Colonic mucosa (tissue), 4 donors: ENCODE measurements at regions of chr6 and their contacts with region 1.

Region 1: DNA sequence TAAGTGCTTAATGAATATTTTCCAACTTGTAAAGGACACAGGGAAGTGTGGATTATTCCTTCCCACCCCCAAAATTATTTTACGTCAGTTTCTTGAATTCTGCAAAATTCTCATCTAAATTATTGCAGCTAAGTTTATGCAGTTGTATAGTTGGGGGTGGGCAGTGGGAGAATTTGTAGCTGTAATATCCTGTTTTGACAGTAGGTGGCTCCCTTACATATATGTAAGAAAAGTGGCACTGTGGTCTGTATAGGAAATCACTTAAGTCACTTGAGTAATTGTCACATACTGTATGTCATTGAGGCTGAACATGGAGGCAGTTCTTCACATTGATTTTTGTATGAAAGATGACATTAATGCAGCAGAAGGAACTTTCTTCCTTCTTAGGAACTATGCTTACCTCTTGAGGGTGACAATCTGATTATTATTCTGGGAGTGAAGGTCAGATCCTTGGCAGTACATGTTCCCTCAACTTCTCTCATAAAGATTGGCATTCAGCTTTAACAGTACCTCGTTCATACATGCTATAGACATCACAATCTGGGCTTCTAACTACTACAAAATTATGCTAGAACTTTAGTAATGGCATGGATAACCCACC is 14.7 kb upstream of the CFAP206 start:
- DNase-seq: peak; percentile 29
- H3K4me3 ChIP-seq: no peak overlapping the region
- H3K27ac ChIP-seq: no peak overlapping the region
- H3K4me1 ChIP-seq: no peaks in the 10 kb centered on the region
- H3K27me3 ChIP-seq: no peaks in the 10 kb centered on the region
- CTCF ChIP-seq: peak; percentile 77

Region 2: DNA sequence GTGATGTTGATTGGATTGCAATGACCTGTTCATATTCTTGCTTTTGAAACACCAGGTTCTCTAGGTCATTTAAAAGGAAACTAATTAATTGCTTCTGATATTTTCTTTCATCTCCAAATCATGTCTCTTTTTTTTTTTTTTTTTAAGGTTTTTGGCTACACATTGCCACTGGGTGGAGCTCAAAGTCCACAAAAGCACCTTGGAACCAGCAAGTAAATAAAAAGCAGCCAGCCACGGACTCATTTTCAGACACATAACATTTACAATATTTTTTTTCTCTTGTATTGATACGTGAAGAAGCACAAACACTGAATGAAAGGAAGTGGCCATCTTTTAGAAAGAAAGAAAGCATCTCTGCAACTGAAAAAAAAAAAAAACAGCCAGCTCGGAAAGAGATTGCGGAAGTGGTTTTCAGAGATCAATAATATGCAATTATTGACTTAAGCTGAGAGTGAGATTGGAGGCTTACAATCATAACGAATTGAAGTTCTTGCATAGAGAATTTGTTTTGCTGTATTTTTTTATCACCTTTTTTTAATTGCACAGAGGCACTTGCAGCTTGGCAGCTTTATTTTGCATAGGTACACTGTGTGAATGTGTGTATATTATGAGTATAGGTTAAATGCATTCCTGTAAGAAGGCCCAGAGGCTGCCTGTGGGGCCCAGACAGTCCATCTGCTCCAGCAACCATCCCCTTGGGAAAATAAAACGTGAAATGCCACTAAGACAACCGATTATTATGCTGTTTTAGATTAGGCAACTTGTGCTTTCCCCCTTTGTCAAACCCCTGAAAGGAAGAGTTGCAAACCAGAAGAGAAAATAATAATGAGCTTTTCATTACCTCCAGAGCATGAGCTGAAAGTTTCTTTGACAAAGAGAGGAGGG is 326.4 kb before region 1 on chr6:
- intact Hi-C with region 1: loop called (anchors 10 kb)
- DNase-seq: peak; percentile 44
- H3K4me3 ChIP-seq: no peak overlapping the region
- H3K27ac ChIP-seq: no peak overlapping the region
- H3K4me1 ChIP-seq: no peaks in the 10 kb centered on the region
- H3K27me3 ChIP-seq: no peaks in the 10 kb centered on the region
- CTCF ChIP-seq: peak; percentile 45

Region 3: GRCh38 chr6:87139236-87139635 is 253.9 kb before region 1 on chr6:
- intact Hi-C with region 1: loop called (anchors 2 kb)
- DNase-seq: peak; percentile 40
- H3K4me3 ChIP-seq: no peak overlapping the region
- H3K27ac ChIP-seq: no peak overlapping the region
- H3K4me1 ChIP-seq: no peaks in the 10 kb centered on the region
- H3K27me3 ChIP-seq: no peaks in the 10 kb centered on the region
- CTCF ChIP-seq: peak; percentile 57

Region 4: DNA sequence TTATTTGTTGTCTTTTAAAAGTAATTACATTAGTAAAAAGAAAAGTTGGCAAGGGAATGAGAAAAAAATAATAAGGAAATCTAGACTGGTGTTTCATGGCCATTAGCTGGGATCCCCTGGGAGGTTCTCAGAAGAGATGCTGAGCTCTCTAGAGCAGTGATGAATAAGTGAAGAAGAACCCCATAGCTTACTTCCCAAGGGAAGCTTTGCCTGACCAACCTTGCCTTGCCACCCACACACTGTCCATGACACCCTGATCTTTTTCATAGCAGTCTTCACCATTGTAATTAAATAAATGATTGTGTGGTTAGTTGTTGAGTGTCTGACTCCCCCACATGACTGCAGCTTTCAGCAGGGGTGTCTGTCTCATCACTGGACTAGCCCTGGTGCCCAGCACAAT is 42.6 kb before region 1 on chr6:
- intact Hi-C with region 1: no loop called
- DNase-seq: no peak
- H3K4me3 ChIP-seq: no peak overlapping the region
- H3K27ac ChIP-seq: no peak overlapping the region
- H3K4me1 ChIP-seq: no peaks in the 10 kb centered on the region
- H3K27me3 ChIP-seq: no peaks in the 10 kb centered on the region
- CTCF ChIP-seq: no peak

Region 5: DNA sequence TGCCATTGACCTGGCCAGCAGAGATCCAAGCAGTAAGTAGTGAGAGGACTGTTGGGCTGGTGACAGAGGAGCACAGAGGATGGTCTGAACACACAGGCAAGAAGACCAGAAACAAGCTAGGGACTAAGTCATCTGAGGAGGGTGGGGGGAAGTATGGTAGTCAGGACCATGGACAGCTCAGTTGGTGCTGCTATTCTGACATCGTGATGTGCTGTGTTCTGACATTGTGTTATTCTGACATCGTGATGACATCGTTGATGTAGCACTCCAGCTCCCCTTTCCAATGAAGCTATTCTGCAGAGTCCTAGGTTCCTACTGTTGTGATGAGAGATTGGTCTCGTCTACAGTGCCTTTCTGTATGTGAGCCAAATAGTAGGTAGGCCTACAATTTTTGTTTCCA is 43.3 kb after region 1 on chr6:
- intact Hi-C with region 1: no loop called
- DNase-seq: peak; percentile 45
- H3K4me3 ChIP-seq: no peak overlapping the region
- H3K27ac ChIP-seq: no peak overlapping the region
- H3K4me1 ChIP-seq: no peaks in the 10 kb centered on the region
- H3K27me3 ChIP-seq: no peaks in the 10 kb centered on the region
- CTCF ChIP-seq: no peak

Region 6: DNA sequence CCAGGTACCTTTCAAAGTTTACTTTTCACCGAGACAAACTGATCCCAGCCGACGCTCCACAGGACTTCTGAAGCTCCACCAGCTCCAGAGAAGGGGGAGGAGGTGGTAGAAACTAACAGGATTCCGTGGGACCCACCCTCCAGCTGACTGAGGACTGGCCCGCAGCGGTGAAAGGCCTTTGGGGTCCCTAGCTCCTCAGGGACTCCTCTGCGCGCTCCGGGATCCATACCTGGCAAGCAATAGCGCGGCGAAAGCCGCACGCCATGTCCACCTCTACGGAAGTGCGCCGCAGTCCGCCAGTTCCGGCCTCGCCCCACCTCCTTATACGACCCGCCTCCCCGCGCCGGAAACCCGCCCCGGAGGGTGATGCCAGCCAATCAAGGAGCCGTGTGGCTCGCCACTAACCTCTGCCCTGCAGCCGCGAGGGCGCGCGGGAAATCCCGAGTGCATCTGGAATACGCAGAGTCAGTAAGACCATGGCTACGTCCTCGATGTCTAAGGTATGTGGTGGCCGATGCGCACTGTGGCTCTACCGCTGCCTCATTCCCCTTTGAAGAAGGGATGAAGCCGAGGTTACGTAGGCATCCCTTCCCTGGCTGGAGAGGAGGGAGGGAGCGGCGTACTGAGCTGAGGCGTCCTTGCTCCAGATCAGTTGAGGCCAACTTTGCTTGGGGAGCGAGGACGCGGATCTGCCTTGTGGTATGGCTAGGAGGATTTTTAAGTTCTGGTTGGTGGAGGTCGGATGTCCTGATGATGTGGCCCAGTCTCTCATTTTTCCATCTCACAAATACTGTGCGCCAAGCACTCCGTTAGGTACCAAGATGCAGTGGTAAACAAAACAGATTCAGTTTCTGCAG is 196.8 kb after region 1 on chr6 and contains the starts of genes ORC3 and RARS2:
- intact Hi-C with region 1: loop called (anchors 10 kb)
- DNase-seq: peak; percentile 98
- H3K4me3 ChIP-seq: peak within 1 kb of the TSS; percentile 85
- H3K27ac ChIP-seq: peak within 1 kb of the TSS; percentile 79
- H3K4me1 ChIP-seq: peaks cover 4% of the 10 kb centered on the region
- H3K27me3 ChIP-seq: no peaks in the 10 kb centered on the region
- CTCF ChIP-seq: no peak
- total RNA-seq, gene ORC3: 14.0 to 16.4 TPM
- total RNA-seq, gene RARS2: 24.7 to 28.2 TPM